HCT116 (cell line): ENCODE measurements at regions of chr11 and their contacts with region 1.

Region 1: GRCh38 chr11:112961146-112961668 is at the start of gene NCAM1:
- DNase-seq: peak; percentile 67
- ATAC-seq: peak; percentile 79
- H3K4me3 ChIP-seq: peak within 1 kb of the TSS; percentile 26
- H3K27ac ChIP-seq: no peak within 1 kb of the TSS
- H3K4me1 ChIP-seq: peaks cover 0 to 6% of the 10 kb centered on the region in 2 experiments; a peak in 2 of 4 replicates
- H3K27me3 ChIP-seq: peaks cover 35% of the 10 kb centered on the region
- CTCF ChIP-seq: no peak
- POLR2A ChIP-seq: no peak
- RAD21 ChIP-seq: no peak
- total RNA-seq, gene NCAM1: 0.22 TPM

Region 2: DNA sequence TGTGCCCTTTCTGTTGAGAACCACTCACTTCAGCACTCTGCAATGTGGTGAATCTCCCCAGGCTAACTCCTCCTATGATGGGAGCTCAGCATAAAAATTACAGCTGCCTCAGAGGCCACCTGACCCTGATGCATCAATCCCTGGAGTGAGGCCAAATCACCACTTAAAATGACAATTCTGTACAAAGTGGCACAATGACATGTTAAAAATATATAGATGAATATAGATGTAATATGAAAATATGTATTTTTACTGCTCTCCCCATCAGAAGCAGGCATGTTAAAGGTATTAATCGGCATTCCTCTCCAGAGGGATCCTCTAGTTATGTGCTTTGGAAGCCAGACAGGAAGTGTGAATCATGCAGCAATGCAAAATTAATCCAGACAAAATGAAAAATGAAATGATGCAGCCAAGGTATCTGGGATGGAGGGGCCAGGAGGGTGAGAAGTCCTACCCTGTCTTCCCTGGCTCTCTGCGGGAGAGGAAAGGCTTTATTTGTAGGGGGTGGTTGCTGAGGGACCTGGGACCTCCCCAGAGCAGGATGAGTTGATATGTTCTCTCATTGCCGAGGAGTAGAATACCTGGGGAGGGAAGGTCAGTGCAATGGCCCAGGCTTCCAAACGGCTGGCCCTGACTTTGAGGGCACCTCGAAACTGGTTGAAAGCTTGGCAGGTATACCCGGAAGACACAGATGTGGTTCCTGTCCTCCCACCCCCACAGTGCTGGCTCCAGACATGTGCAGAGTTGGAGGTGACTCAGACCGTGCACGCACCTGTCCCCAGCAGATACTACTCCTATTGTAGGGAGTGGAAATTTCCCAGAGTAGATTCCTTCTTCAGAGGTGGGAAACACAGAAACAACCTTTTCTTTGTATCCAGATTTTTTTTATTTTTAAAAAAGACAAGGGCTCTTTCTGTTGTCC is 347.9 kb before region 1 on chr11:
- CTCF ChIA-PET with region 1: no interaction called
- POLR2A ChIA-PET with region 1: no interaction called
- RAD21 ChIA-PET with region 1: no interaction called
- intact Hi-C with region 1: loop called (anchors 2 kb)
- DNase-seq: peak; percentile 62
- ATAC-seq: peak; percentile 88
- H3K4me3 ChIP-seq: peak overlapping the region; percentile 17 to 47; a peak in 3 of 4 replicates
- H3K27ac ChIP-seq: peak overlapping the region; percentile 90
- H3K4me1 ChIP-seq: peaks cover 29 to 42% of the 10 kb centered on the region in 2 experiments
- H3K27me3 ChIP-seq: no peaks in the 10 kb centered on the region
- CTCF ChIP-seq: no peak
- POLR2A ChIP-seq: no peak
- RAD21 ChIP-seq: no peak; the same call in 1 of the 2 replicates

Region 3: GRCh38 chr11:112627588-112628045 is 333.6 kb before region 1 on chr11:
- CTCF ChIA-PET with region 1: no interaction called
- POLR2A ChIA-PET with region 1: no interaction called
- RAD21 ChIA-PET with region 1: no interaction called
- intact Hi-C with region 1: no loop called
- DNase-seq: no peak
- ATAC-seq: no peak
- H3K4me3 ChIP-seq: no peak overlapping the region
- H3K27ac ChIP-seq: no peak overlapping the region
- H3K4me1 ChIP-seq: no peaks in the 10 kb centered on the region
- H3K27me3 ChIP-seq: peaks cover 46% of the 10 kb centered on the region
- CTCF ChIP-seq: no peak
- POLR2A ChIP-seq: no peak
- RAD21 ChIP-seq: no peak

Region 4: GRCh38 chr11:112977755-112978154 is 16.5 kb after region 1 on chr11:
- CTCF ChIA-PET with region 1: no interaction called
- POLR2A ChIA-PET with region 1: no interaction called
- RAD21 ChIA-PET with region 1: no interaction called
- intact Hi-C with region 1: no loop called
- DNase-seq: no peak
- ATAC-seq: no peak
- H3K4me3 ChIP-seq: no peak overlapping the region
- H3K27ac ChIP-seq: no peak overlapping the region
- H3K4me1 ChIP-seq: no peaks in the 10 kb centered on the region
- H3K27me3 ChIP-seq: peaks cover 29% of the 10 kb centered on the region
- CTCF ChIP-seq: no peak
- POLR2A ChIP-seq: no peak
- RAD21 ChIP-seq: no peak

Region 5: DNA sequence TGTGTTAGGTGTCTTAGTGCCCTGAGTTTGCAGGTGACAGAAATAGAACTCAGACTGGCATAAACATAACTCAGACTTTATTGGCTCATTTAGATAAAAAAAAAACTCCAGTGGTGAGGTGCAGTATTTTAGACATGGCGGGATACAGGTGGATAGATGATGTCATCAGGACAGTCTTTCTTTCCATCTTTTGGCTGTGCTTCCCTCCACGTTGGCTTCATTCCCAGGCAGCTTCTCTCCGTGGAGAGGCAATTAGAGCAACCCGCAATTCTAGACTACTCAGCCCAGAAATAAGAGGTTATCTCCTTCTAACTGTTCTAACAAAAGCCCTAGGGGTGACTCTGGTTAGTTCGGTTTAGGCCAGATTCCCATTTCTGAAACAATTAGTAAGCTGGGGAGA is 40.5 kb after region 1 on chr11:
- CTCF ChIA-PET with region 1: no interaction called
- POLR2A ChIA-PET with region 1: no interaction called
- RAD21 ChIA-PET with region 1: no interaction called
- intact Hi-C with region 1: no loop called
- DNase-seq: no peak
- ATAC-seq: no peak
- H3K4me3 ChIP-seq: no peak overlapping the region
- H3K27ac ChIP-seq: no peak overlapping the region
- H3K4me1 ChIP-seq: no peaks in the 10 kb centered on the region
- H3K27me3 ChIP-seq: peaks cover 24% of the 10 kb centered on the region
- CTCF ChIP-seq: no peak
- POLR2A ChIP-seq: no peak
- RAD21 ChIP-seq: no peak

Region 6: DNA sequence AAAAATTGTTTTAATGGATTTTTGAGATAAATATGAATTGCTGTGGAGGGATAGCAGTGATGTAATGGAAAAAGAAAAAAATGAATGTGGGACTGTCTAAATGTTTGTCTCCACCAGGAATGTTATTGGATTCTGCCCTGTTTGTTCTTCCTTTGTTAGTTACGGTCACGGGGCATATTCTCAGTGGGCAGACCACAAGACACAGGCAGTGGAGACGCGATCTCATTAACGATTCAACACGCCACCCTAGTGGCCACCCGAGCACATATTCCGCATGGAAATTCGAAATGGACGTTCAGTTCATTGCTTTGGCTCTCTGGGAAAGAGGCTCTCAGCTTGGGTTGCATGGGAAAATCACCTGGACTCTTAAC is 201.4 kb after region 1 on chr11:
- CTCF ChIA-PET with region 1: no interaction called
- POLR2A ChIA-PET with region 1: no interaction called
- RAD21 ChIA-PET with region 1: no interaction called
- intact Hi-C with region 1: no loop called
- DNase-seq: no peak
- ATAC-seq: no peak
- H3K4me3 ChIP-seq: no peak overlapping the region
- H3K27ac ChIP-seq: no peak overlapping the region
- H3K4me1 ChIP-seq: no peaks in the 10 kb centered on the region
- H3K27me3 ChIP-seq: peaks cover 25% of the 10 kb centered on the region
- CTCF ChIP-seq: peak in 2 of 3 experiments; percentile 15 to 33; a peak in 3 of 6 replicates
- POLR2A ChIP-seq: no peak
- RAD21 ChIP-seq: 0 out of 2 replicates have a peak, but pooled peaks have one; percentile 7